MCF 10A (cell line): ENCODE measurements at regions of chr11 and their contacts with region 1.

Region 1: DNA sequence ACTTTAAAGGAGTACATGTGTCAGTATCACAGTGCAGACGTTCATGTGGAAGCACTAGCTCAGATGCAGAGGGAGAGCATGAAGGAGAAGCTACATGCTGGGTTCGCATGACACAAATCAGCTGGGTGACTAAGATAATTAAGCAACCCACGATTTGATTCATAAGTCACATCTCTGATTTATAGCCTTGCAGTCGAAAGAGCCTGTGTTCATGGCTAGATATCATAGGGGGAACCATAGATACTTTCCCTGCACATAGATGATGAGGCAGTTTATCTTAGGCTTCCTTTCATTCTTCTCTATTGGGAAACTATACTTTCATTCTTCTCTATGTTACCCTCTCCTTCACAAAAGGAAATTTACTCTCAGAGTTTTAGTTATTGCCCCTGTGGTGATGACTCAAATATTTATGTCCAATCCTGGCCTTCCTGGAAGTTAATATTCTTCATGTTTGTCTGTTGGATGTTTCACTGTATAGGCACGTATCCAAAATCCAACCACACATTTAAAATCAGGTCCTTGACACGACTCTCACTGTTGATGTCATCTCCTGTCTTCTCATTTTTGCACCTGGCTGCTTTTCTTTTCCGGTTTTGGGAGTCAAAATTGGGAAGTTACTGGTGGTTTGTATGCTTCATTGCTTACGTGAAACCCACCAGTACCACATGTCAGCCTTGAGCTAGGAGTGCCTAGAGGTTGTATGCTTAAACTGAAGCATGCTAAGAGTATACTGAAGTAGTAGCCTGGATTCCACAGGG is 56.3 kb upstream of the SLC5A12 start:
- DNase-seq: peak; percentile 61
- H3K4me3 Mint-ChIP-seq: no peak overlapping the region
- H3K27ac Mint-ChIP-seq: no peak overlapping the region
- H3K4me1 Mint-ChIP-seq: no peaks in the 10 kb centered on the region
- H3K27me3 Mint-ChIP-seq: no peaks in the 10 kb centered on the region
- CTCF ChIP-seq: no peak

Region 2: DNA sequence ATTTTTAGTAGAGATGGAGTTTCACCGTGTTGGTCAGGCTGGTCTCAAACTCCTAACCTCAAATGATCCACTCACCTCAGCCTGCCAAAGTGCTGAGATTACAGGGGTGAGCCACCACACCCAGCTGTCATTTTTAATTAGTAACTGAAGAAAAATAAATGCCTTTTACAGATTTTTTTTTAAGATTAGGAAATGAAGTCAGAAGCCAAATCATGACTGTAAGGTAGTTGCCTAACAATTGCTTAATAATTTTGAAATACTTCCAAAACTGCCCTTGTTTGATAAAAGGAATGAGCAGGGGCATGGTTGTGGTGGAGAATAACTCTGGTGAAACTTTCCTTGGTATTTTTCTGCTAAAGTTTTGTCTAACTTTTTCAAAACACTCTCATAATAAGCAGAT is 42.6 kb after region 1 on chr11:
- CTCF ChIA-PET with region 1: interaction called, 3 read pairs
- POLR2A ChIA-PET with region 1: interaction called, 4 read pairs
- intact Hi-C with region 1: loop called (anchors 5 kb)
- DNase-seq: peak; percentile 82
- H3K4me3 Mint-ChIP-seq: no peak overlapping the region
- H3K27ac Mint-ChIP-seq: peak overlapping the region; percentile 40
- H3K4me1 Mint-ChIP-seq: peaks cover 14% of the 10 kb centered on the region
- H3K27me3 Mint-ChIP-seq: no peaks in the 10 kb centered on the region
- CTCF ChIP-seq: no peak

Region 3: GRCh38 chr11:26896719-26897118 is 118.5 kb after region 1 on chr11:
- CTCF ChIA-PET with region 1: no interaction called
- POLR2A ChIA-PET with region 1: no interaction called
- intact Hi-C with region 1: no loop called
- DNase-seq: no peak
- H3K4me3 Mint-ChIP-seq: no peak overlapping the region
- H3K27ac Mint-ChIP-seq: no peak overlapping the region
- H3K4me1 Mint-ChIP-seq: peaks cover 6% of the 10 kb centered on the region
- H3K27me3 Mint-ChIP-seq: no peaks in the 10 kb centered on the region
- CTCF ChIP-seq: no peak